Heart right ventricle (tissue), 16 donors: ENCODE measurements at regions of chr13 and their contacts with region 1.

Region 1: GRCh38 chr13:35881360-35881759 is 249.8 kb downstream of the DCLK1 start:
- DNase-seq: no peak
- ATAC-seq: peak in 6 of 8 donors; percentile 6 to 70 (median 31)
- H3K4me3 ChIP-seq: no peak overlapping the region
- H3K27ac ChIP-seq: peak overlapping the region in 4 of 10 donors; percentile 4 to 34 (median 23)
- H3K4me1 ChIP-seq: peaks cover 0 to 19% (median 8%) of the 10 kb centered on the region in 9 donors
- H3K27me3 ChIP-seq: no peaks in the 10 kb centered on the region
- CTCF ChIP-seq: no peak

Region 2: GRCh38 chr13:35838356-35838755 is 43.0 kb before region 1 on chr13:
- intact Hi-C with region 1: loop called in 1 of 10 experiments (anchors 5 kb)
- DNase-seq: no peak
- ATAC-seq: peak in 6 of 8 donors; percentile 21 to 74 (median 57)
- H3K4me3 ChIP-seq: no peak overlapping the region
- H3K27ac ChIP-seq: peak overlapping the region in 9 of 10 donors; percentile 16 to 77 (median 73)
- H3K4me1 ChIP-seq: peaks cover 0 to 24% (median 0%) of the 10 kb centered on the region in 9 donors
- H3K27me3 ChIP-seq: no peaks in the 10 kb centered on the region
- CTCF ChIP-seq: no peak

Region 3: DNA sequence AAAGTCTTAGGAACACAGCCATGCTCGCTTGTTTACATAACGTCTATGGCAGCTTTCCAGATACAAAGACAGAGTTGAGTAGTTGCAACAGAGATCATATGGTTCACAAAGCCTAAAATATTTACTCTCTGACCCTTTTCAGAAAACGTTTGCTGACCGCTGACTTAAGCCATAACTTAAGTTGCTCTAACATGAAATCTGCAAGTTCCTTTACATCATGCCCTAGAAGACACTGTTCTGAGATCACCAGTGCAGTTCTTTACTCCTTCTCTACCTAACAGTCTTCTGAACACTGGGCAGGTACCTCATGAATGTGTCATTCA is 83.5 kb after region 1 on chr13:
- intact Hi-C with region 1: no loop called
- DNase-seq: no peak
- ATAC-seq: peak in 2 of 8 donors; percentile 37 to 39
- H3K4me3 ChIP-seq: no peak overlapping the region
- H3K27ac ChIP-seq: peak overlapping the region in 3 of 10 donors; percentile 10 to 13 (median 12)
- H3K4me1 ChIP-seq: peaks cover 0 to 22% (median 8%) of the 10 kb centered on the region in 9 donors
- H3K27me3 ChIP-seq: no peaks in the 10 kb centered on the region
- CTCF ChIP-seq: no peak

Region 4: GRCh38 chr13:36029166-36029565 is 147.8 kb after region 1 on chr13:
- intact Hi-C with region 1: loop called in 1 of 10 experiments (anchors 5 kb)
- DNase-seq: no peak
- ATAC-seq: no peak
- H3K4me3 ChIP-seq: no peak overlapping the region
- H3K27ac ChIP-seq: no peak overlapping the region
- H3K4me1 ChIP-seq: peaks cover 0 to 14% (median 6%) of the 10 kb centered on the region in 9 donors
- H3K27me3 ChIP-seq: no peaks in the 10 kb centered on the region
- CTCF ChIP-seq: no peak

Region 5: GRCh38 chr13:36163809-36164308 is 282.5 kb after region 1 on chr13:
- intact Hi-C with region 1: no loop called
- DNase-seq: peak; percentile 40 to 53
- ATAC-seq: peak in 7 of 8 donors; percentile 42 to 88 (median 67)
- H3K4me3 ChIP-seq: no peak overlapping the region
- H3K27ac ChIP-seq: no peak overlapping the region
- H3K4me1 ChIP-seq: peaks cover 0 to 12% (median 7%) of the 10 kb centered on the region in 9 donors
- H3K27me3 ChIP-seq: no peaks in the 10 kb centered on the region
- CTCF ChIP-seq: no peak